CD4-positive, alpha-beta T cell (primary cell): ENCODE measurements at regions of chr6 and their contacts with region 1.

Region 1: DNA sequence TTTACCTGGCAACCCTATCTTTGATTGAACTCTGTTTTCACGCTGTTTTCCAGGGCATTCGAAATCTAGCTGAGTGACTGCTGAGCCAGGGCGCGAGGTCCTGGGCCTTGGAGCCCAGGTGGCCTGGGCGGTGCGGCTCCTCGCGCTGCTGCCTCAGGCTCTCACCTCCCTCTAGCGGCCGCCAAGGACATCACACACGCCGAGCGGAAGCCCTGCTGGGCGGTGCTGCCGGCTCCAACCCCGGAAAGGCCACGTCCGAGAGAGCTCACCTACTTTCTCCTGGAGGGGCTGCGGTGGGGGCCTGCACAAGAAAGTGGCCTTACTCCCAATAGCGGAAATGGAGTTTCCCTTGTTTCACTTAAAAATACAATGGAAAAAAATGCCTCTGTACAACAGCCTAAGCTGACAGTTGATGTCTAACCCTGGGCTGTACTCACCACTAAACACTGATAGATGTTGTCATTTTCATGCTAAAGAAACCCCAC is 77.7 kb downstream of the ELOVL4 start:
- DNase-seq: peak; percentile 60 to 88 (median 68)
- ATAC-seq: peak; percentile 99
- H3K4me3 ChIP-seq: peak overlapping the region; percentile 19
- H3K4me3 Mint-ChIP-seq: peak overlapping the region; percentile 35
- H3K27ac ChIP-seq: no peak overlapping the region
- H3K27ac Mint-ChIP-seq: no peak overlapping the region
- H3K4me1 ChIP-seq: peaks cover 9% of the 10 kb centered on the region
- H3K4me1 Mint-ChIP-seq: peaks cover 15% of the 10 kb centered on the region
- H3K27me3 ChIP-seq: peaks cover 0 to 6% of the 10 kb centered on the region in 2 experiments
- H3K27me3 Mint-ChIP-seq: peaks cover 14% of the 10 kb centered on the region
- CTCF ChIP-seq: peak; percentile 97

Region 2: DNA sequence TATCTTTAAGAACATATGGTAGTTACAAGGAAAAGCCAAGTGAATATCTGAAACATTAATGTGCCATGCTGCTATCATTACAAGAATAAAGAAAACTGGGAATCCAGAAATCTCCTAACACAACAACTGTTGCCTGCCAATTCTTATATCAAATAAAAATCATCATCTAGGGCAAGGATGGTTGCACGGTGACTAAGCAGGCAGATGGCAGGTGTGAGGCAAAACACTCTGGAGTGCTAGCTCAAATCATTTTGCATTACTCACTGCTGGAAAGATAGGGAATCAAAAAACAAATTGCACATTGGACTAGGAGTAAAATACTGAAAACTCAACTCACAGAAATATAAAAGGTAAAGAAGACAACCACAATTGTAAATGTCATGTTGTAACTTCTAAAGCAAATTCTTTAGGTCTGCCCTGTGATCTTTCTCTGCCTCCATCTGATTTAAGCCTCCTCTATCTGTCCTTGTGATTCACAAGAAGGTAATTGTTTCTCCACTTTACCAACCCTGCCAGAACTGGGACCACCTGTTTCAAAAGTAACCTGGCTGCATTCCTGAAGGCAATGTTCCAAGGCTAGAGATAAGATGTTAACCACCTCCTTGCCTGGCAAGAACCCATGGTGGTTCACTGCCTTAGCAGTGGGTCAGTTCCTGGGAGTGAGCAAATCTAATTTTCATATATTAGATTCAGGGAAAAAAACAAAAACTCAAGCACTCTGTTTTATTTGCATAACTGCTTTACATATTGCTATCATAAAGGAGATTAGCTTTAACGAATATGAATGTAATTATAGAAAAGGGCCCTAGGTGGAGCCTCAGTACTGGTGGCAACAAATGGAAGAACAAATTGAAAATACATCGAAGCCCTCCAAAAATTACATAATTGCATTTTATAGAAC is 299.3 kb before region 1 on chr6:
- CTCF ChIA-PET with region 1: no interaction called
- POLR2A ChIA-PET with region 1: no interaction called
- intact Hi-C with region 1: loop called (anchors 1 to 10 kb)
- DNase-seq: peak in 3 of 14 experiments; percentile 27 to 46 (median 43)
- ATAC-seq: peak; percentile 57
- H3K4me3 ChIP-seq: no peak overlapping the region
- H3K4me3 Mint-ChIP-seq: no peak overlapping the region
- H3K27ac ChIP-seq: no peak overlapping the region
- H3K27ac Mint-ChIP-seq: no peak overlapping the region
- H3K4me1 ChIP-seq: no peaks in the 10 kb centered on the region
- H3K4me1 Mint-ChIP-seq: peaks cover 5% of the 10 kb centered on the region
- H3K27me3 ChIP-seq: no peaks in the 10 kb centered on the region
- H3K27me3 Mint-ChIP-seq: no peaks in the 10 kb centered on the region
- CTCF ChIP-seq: peak; percentile 74

Region 3: GRCh38 chr6:79777713-79778579 is 91.7 kb before region 1 on chr6:
- CTCF ChIA-PET with region 1: interaction called, 8 read pairs
- POLR2A ChIA-PET with region 1: no interaction called
- intact Hi-C with region 1: loop called in 1 of 2 experiments (anchors 2 kb)
- DNase-seq: peak; percentile 72 to 93 (median 78)
- ATAC-seq: peak; percentile 97
- H3K4me3 ChIP-seq: peak overlapping the region; percentile 51
- H3K4me3 Mint-ChIP-seq: peak overlapping the region; percentile 83
- H3K27ac ChIP-seq: no peak overlapping the region
- H3K27ac Mint-ChIP-seq: no peak overlapping the region
- H3K4me1 ChIP-seq: peaks cover 9% of the 10 kb centered on the region
- H3K4me1 Mint-ChIP-seq: peaks cover 8% of the 10 kb centered on the region
- H3K27me3 ChIP-seq: no peaks in the 10 kb centered on the region
- H3K27me3 Mint-ChIP-seq: no peaks in the 10 kb centered on the region
- CTCF ChIP-seq: peak; percentile 98

Region 4: DNA sequence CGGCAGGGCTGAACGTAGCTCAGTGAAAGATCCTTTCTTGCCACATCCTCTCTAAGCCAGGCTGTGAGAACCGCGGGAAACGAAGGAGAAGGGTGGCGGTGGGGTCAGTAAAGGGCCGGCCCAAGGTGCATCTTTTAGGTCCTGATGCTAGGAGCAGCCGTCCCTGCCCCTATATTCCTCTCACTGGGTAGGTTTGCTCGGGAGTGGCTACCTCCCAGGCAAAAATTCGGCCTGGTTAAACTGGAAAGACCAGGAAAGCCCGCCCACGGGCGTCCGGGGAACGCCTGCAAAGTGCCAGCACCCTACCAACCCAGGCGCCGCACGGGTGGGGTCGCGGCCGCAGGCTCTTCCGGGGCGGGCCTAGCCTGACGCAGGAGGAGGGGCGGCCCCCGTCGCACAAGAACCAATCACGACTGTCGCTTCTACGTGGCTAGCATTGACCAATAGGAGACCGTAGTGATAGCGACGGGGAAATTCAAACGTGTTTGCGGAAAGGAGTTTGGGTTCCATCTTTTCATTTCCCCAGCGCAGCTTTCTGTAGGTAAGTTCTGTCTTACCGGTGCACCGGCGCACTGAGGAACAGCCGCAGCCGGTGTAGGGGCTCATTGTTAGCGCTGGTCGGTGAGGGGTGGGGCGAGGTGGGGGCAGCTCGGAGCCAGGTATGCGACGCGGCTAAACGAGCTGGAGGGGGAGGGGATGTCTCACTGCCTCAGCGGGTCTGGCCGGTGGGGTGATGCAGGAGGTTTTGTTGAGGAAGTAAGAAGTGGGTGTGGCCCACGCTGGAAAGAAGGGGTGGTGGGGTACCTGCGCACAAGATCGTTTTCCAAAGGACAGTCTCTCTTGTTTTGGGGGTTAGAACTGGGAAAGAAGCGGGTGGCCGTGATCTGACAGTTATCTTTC is 134.8 kb after region 1 on chr6 and contains the start of gene TTK:
- CTCF ChIA-PET with region 1: no interaction called
- POLR2A ChIA-PET with region 1: interaction called, 3 read pairs
- intact Hi-C with region 1: loop called in 1 of 2 experiments (anchors 5 kb)
- DNase-seq: peak; percentile 81 to 97 (median 90)
- ATAC-seq: peak; percentile 97
- H3K4me3 ChIP-seq: peak within 1 kb of the TSS; percentile 67
- H3K4me3 Mint-ChIP-seq: peak within 1 kb of the TSS; percentile 93
- H3K27ac ChIP-seq: peak within 1 kb of the TSS; percentile 85 to 86
- H3K27ac Mint-ChIP-seq: peak within 1 kb of the TSS; percentile 95
- H3K4me1 ChIP-seq: peaks cover 14% of the 10 kb centered on the region
- H3K4me1 Mint-ChIP-seq: peaks cover 21% of the 10 kb centered on the region
- H3K27me3 ChIP-seq: no peaks in the 10 kb centered on the region
- H3K27me3 Mint-ChIP-seq: no peaks in the 10 kb centered on the region
- CTCF ChIP-seq: no peak
- total RNA-seq, gene TTK: 0.45 to 0.60 TPM